Activated CD4-positive, alpha-beta T cell treated with anti-CD3 and anti-CD28 coated beads, Interleukin-2, amount 10 ng/mL, durations not matched to agents 24 days and 14 days (primary cell): ENCODE measurements at regions of chr12 and their contacts with region 1.

Region 1: DNA sequence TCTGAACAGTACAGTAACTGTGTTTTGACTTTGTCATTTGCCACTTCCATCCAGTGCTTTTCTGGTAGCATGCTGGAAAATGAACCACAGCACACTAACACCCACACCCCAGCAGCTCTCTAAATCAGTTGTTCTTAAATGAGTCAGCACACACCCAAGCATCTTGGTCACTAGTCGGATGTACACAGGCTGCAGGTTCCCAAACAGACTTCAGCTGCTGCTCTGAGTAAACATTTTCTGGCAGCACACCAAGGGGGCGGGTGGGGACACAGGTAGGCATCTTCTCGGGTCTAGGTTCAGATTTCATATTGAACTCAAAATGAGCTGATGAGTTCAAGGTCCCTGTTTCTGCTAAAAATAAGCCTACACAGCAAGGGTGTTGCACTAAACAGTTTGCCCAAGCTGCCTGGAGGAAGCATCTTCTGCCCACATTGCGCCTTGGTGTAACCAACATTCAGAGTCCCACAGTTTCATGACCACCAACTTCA is 39.8 kb downstream of the IFNG start:
- DNase-seq: peak; percentile 88
- H3K4me3 Mint-ChIP-seq: peak overlapping the region; percentile 39
- H3K27ac Mint-ChIP-seq: no peak overlapping the region
- H3K4me1 Mint-ChIP-seq: peaks cover 35% of the 10 kb centered on the region
- H3K27me3 Mint-ChIP-seq: no peaks in the 10 kb centered on the region

Region 2: DNA sequence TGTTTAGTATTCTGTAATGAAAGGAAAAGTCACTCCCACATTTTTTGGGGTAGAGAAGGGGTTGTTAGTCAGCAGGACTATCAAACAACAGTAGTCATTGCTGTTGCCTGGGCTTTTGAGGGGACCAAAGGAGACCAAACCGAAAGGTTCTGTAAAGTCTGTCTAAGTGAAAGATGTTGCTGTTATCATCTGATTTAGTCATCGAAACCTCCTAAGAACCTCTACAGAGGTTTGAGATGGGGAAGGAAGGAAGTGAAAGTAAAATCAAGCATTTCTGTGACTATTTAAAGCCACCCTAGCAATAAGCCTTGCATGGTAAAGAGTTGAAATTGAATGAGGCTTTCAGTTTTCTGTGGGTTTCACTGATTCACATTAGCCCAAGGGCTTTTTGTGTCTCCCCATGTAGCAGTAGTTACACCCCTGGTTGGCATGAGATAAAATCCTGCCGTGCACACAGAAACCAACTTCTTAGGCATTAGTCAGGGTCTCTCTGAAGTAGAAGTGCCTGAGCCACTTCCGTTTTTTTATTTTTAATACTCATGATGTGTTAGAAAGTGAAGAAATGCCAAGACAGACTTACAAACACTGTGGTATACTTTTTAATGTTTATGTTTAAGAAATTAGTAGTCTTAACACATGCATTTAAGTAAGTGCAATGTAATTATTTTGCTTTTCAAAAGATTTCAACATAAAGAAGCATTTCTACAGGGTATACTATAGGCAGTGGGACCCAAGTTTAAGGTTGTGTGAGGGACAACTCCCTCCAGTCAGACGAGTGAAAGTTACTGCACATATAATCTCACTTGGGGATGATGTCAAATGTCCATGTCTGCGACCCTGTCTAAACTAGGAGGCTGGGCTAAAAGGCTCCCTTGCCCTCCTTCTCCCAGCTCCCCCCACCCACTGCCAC is 420.8 kb before region 1 on chr12:
- intact Hi-C with region 1: loop called (anchors 2 kb)
- DNase-seq: peak; percentile 83
- H3K4me3 Mint-ChIP-seq: peak overlapping the region; percentile 70
- H3K27ac Mint-ChIP-seq: peak overlapping the region; percentile 65
- H3K4me1 Mint-ChIP-seq: peaks cover 40% of the 10 kb centered on the region
- H3K27me3 Mint-ChIP-seq: peaks cover 58% of the 10 kb centered on the region

Region 3: DNA sequence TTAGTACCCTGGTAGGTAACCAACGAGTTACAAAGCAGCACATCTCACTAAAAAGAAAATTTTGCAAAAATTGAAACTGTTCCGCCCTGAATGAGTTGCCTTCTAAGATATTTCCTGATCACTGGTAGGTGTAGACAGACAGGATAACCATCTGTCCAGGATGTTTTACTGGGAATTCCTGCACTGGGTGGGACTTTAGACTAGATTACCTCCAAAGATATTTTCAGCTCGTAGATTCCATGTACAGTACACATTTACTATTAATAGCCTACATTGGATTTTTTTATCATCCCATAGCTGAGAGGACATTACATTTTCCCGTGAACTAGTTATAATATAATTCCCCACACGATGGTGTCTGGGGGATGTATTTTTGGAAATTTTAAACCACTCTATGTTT is 331.6 kb before region 1 on chr12:
- intact Hi-C with region 1: no loop called
- DNase-seq: no peak
- H3K4me3 Mint-ChIP-seq: no peak overlapping the region
- H3K27ac Mint-ChIP-seq: no peak overlapping the region
- H3K4me1 Mint-ChIP-seq: peaks cover 3% of the 10 kb centered on the region
- H3K27me3 Mint-ChIP-seq: no peaks in the 10 kb centered on the region

Region 4: GRCh38 chr12:68080577-68080976 is 39.2 kb before region 1 on chr12:
- intact Hi-C with region 1: loop called (anchors 1 kb)
- DNase-seq: peak; percentile 79
- H3K4me3 Mint-ChIP-seq: peak overlapping the region; percentile 59
- H3K27ac Mint-ChIP-seq: peak overlapping the region; percentile 84
- H3K4me1 Mint-ChIP-seq: peaks cover 34% of the 10 kb centered on the region
- H3K27me3 Mint-ChIP-seq: no peaks in the 10 kb centered on the region

Region 5: DNA sequence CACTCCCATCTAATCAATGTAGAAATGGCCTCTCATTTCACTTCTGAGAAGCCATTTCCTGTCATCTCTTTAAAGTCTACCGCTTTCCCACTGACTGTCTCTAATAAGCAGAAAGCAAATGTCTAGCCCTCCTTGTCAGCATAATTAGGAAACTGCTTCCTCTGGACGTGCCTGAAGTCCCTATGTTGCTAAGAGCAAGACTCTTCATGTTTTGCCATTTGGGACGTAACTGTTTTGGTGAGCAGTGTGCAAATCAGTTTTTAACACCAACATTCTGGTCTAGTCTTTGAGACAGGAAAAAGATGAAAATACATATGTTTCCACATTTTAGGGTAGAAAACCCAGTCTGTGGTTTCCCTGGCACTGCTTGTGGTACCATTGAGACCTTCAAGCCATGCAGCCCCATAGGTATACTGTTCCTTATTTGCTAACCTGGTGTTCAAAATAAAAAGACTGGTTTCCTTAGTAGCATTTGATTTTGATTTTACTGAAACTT is 17.6 kb after region 1 on chr12:
- intact Hi-C with region 1: loop called (anchors 1 kb)
- DNase-seq: peak; percentile 65
- H3K4me3 Mint-ChIP-seq: peak overlapping the region; percentile 53
- H3K27ac Mint-ChIP-seq: peak overlapping the region; percentile 89
- H3K4me1 Mint-ChIP-seq: peaks cover 65% of the 10 kb centered on the region
- H3K27me3 Mint-ChIP-seq: no peaks in the 10 kb centered on the region

Region 6: DNA sequence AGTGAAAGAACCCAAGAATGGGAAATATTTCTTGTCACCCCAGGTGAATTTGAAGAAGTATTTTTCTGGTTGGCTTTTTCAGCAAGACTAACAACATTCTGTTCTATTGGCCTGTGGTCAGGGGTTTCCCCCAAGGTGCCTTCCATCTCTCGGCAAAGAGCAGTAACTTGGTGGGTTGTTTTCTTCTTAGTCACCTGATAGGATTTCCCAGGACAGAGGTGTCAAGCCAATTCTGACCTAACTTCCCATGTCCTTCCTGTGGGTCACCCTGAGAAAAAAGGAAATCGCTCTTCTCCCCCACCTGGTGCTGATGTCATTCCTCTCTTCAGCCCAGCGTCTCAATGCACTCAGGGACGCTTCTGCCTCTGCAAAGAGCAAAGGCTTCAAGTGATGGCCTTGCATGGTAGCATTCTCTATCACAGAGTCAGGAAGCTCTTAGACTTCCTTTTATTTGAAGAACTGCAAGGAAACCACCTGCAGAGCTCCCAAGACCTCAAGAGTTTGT is 55.8 kb after region 1 on chr12:
- intact Hi-C with region 1: loop called (anchors 1 kb)
- DNase-seq: peak; percentile 92
- H3K4me3 Mint-ChIP-seq: peak overlapping the region; percentile 68
- H3K27ac Mint-ChIP-seq: peak overlapping the region; percentile 85
- H3K4me1 Mint-ChIP-seq: peaks cover 53% of the 10 kb centered on the region
- H3K27me3 Mint-ChIP-seq: no peaks in the 10 kb centered on the region

Region 7: DNA sequence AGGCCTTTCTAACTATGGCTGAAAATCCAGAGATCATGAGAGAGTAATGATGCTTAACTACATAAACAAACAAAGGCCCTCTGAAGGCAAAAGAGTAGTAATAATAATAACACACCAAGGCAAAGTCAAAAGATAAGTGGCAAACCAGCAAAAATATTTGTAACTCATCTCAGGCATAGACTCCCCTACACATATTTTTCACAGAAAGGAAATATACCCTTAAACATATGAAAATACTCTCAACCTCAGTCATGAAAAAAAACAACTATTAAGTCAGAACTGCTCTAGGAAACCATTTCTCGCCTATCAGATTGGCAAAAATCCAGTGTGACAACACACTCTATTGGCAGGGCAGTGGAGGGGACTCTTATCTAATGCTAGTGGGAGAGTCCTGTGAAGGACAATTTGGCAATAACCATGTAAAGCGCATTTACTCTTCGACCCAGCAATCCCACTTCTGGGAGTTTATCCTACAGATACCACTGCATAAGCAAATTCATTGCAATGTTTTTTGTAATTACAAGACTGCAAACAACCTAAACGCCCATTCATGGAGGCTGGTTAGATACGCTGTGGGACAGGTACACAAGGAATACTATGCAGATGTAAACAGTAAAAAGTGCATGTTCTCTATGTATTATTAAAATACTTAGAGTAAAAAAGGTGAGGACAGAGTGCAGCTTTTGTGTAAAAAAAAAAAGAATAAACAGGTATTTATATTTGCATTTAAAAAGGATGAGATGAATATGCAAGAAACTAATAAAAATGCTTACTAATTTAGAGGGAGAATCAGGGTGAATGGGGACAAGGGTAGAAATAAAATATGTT is 159.7 kb after region 1 on chr12:
- intact Hi-C with region 1: loop called (anchors 5 kb)
- DNase-seq: peak; percentile 3
- H3K4me3 Mint-ChIP-seq: no peak overlapping the region
- H3K27ac Mint-ChIP-seq: peak overlapping the region; percentile 60
- H3K4me1 Mint-ChIP-seq: peaks cover 54% of the 10 kb centered on the region
- H3K27me3 Mint-ChIP-seq: no peaks in the 10 kb centered on the region